Left ventricle myocardium superior (tissue), 1 donor: ENCODE measurements at regions of chr18 and their contacts with region 1.

Region 1: GRCh38 chr18:43271593-43272432 is 5.5 kb downstream of the SYT4 start:
- DNase-seq: no peak
- ATAC-seq: no peak

Region 2: GRCh38 chr18:42586601-42587000 is 685.2 kb before region 1 on chr18:
- intact Hi-C with region 1: loop called (anchors 10 kb)
- DNase-seq: no peak
- ATAC-seq: no peak

Region 3: DNA sequence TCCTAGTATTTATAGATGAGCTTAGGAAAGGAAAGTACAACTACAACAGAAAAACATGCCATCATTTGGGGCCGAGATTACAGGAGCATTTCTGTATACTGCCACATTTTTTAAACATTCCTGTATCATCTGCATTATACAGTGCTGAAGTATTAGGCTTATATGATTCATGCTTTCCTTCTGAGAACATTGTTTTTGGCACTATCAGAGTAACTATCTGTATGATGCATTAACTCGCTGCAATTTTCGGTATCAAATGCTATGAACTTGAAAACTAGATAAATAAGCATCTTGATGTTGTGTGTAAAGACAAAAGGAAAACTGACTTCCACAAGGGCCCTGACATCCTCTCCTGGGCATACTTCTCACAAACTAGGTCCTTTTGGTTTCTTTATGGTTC is 258.3 kb before region 1 on chr18:
- intact Hi-C with region 1: no loop called
- DNase-seq: no peak
- ATAC-seq: no peak

Region 4: GRCh38 chr18:43382641-43383403 is 111.0 kb after region 1 on chr18:
- intact Hi-C with region 1: no loop called
- DNase-seq: no peak
- ATAC-seq: no peak